HepG2 (cell line): ENCODE measurements at regions of chr17 and their contacts with region 1.

Region 1: GRCh38 chr17:56913864-56914640 is at the start of gene TRIM25:
- DNase-seq: peak; percentile 86
- ATAC-seq: peak; percentile 91
- H3K4me3 ChIP-seq: peak within 1 kb of the TSS; percentile 96 to 98 (median 98)
- H3K27ac ChIP-seq: peak within 1 kb of the TSS; percentile 85
- H3K4me1 ChIP-seq: peaks cover 49% of the 10 kb centered on the region
- H3K27me3 ChIP-seq: no peaks in the 10 kb centered on the region; a peak in 1 of 5 replicates
- CTCF ChIP-seq: no peak
- EP300 ChIP-seq: peak; percentile 13 to 28; a peak in 1 of 4 replicates
- POLR2A ChIP-seq: peak; percentile 99 to 100
- RAD21 ChIP-seq: 0 out of 2 replicates have a peak, but pooled peaks have one; percentile 48
- total RNA-seq, gene TRIM25: 38.3 and 42.2 TPM in 2 replicates

Region 2: GRCh38 chr17:56819431-56820145 is 94.5 kb before region 1 on chr17:
- CTCF ChIA-PET with region 1: no interaction called
- POLR2A ChIA-PET with region 1: interaction called, 13 read pairs
- in situ Hi-C with region 1: no loop called
- intact Hi-C with region 1: no loop called
- DNase-seq: peak; percentile 89
- ATAC-seq: peak; percentile 93
- H3K4me3 ChIP-seq: peak overlapping the region in 2 of 3 experiments; percentile 18 to 30; a peak in 2 of 6 replicates
- H3K27ac ChIP-seq: no peak overlapping the region
- H3K4me1 ChIP-seq: peaks cover 21% of the 10 kb centered on the region
- H3K27me3 ChIP-seq: peaks cover 0 to 15% of the 10 kb centered on the region in 2 experiments; a peak in 4 of 5 replicates
- CTCF ChIP-seq: peak; percentile 95
- EP300 ChIP-seq: no peak
- POLR2A ChIP-seq: no peak
- RAD21 ChIP-seq: peak; percentile 83

Region 3: DNA sequence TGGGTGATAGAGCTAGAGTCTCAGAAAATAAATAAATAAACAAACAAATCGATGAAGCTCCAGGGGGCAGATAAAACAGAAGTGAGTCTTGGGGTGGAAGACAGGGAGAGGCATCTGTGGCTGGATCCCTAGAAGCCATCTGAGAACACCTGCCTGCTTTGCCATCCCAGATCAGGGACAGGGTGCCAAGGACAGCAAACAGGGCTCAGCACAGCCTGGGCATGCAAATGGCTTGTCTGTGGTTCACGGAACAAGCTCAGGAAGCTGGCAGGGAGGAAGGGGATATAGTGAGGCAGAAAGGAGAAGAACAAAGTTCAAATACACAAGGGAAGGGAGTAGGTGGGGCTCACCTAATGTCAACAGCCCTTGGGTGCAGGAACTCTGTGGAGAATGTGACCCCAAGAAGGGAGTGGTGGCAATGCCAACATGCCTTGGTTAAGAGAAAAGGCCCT is 27.7 kb before region 1 on chr17:
- CTCF ChIA-PET with region 1: no interaction called
- POLR2A ChIA-PET with region 1: interaction called, 15 read pairs
- in situ Hi-C with region 1: no loop called
- intact Hi-C with region 1: no loop called
- DNase-seq: peak; percentile 72
- ATAC-seq: peak; percentile 60
- H3K4me3 ChIP-seq: 0 out of 6 replicates have a peak overlapping the region, but pooled peaks of 1 of the 3 experiments have one; percentile 3
- H3K27ac ChIP-seq: no peak overlapping the region
- H3K4me1 ChIP-seq: peaks cover 40% of the 10 kb centered on the region
- H3K27me3 ChIP-seq: no peaks in the 10 kb centered on the region
- CTCF ChIP-seq: no peak
- EP300 ChIP-seq: no peak
- POLR2A ChIP-seq: peak in 1 of 2 experiments; percentile 36; a peak in 1 of 4 replicates
- RAD21 ChIP-seq: no peak

Region 4: GRCh38 chr17:56902355-56903083 is 11.5 kb before region 1 on chr17:
- CTCF ChIA-PET with region 1: no interaction called
- POLR2A ChIA-PET with region 1: interaction called, 28 read pairs
- in situ Hi-C with region 1: no loop called
- intact Hi-C with region 1: no loop called
- DNase-seq: no peak
- ATAC-seq: no peak
- H3K4me3 ChIP-seq: no peak overlapping the region
- H3K27ac ChIP-seq: no peak overlapping the region
- H3K4me1 ChIP-seq: peaks cover 13% of the 10 kb centered on the region
- H3K27me3 ChIP-seq: no peaks in the 10 kb centered on the region
- CTCF ChIP-seq: no peak
- EP300 ChIP-seq: no peak
- POLR2A ChIP-seq: no peak
- RAD21 ChIP-seq: no peak

Region 5: GRCh38 chr17:56960596-56961538 is 46.8 kb after region 1 on chr17 and contains the start of gene COIL:
- CTCF ChIA-PET with region 1: no interaction called
- POLR2A ChIA-PET with region 1: interaction called, 17 read pairs
- in situ Hi-C with region 1: no loop called
- intact Hi-C with region 1: no loop called
- DNase-seq: peak; percentile 92
- ATAC-seq: peak; percentile 99
- H3K4me3 ChIP-seq: peak within 1 kb of the TSS; percentile 72 to 92 (median 82)
- H3K27ac ChIP-seq: peak within 1 kb of the TSS; percentile 93
- H3K4me1 ChIP-seq: peaks cover 55% of the 10 kb centered on the region
- H3K27me3 ChIP-seq: no peaks in the 10 kb centered on the region
- CTCF ChIP-seq: peak; percentile 98
- EP300 ChIP-seq: no peak
- POLR2A ChIP-seq: peak; percentile 78 to 94
- RAD21 ChIP-seq: peak; percentile 86
- total RNA-seq, gene COIL: 29.4 and 39.0 TPM in 2 replicates

Region 6: GRCh38 chr17:57033295-57033694 is 119.2 kb after region 1 on chr17:
- CTCF ChIA-PET with region 1: no interaction called
- POLR2A ChIA-PET with region 1: no interaction called
- in situ Hi-C with region 1: no loop called
- intact Hi-C with region 1: no loop called
- DNase-seq: no peak
- ATAC-seq: no peak
- H3K4me3 ChIP-seq: no peak overlapping the region
- H3K27ac ChIP-seq: no peak overlapping the region
- H3K4me1 ChIP-seq: peaks cover 18% of the 10 kb centered on the region
- H3K27me3 ChIP-seq: no peaks in the 10 kb centered on the region; a peak in 1 of 5 replicates
- CTCF ChIP-seq: no peak
- EP300 ChIP-seq: no peak
- POLR2A ChIP-seq: no peak
- RAD21 ChIP-seq: no peak